ENCODE measurements at regions of chr18 and their contacts with region 1.

Region 1: DNA sequence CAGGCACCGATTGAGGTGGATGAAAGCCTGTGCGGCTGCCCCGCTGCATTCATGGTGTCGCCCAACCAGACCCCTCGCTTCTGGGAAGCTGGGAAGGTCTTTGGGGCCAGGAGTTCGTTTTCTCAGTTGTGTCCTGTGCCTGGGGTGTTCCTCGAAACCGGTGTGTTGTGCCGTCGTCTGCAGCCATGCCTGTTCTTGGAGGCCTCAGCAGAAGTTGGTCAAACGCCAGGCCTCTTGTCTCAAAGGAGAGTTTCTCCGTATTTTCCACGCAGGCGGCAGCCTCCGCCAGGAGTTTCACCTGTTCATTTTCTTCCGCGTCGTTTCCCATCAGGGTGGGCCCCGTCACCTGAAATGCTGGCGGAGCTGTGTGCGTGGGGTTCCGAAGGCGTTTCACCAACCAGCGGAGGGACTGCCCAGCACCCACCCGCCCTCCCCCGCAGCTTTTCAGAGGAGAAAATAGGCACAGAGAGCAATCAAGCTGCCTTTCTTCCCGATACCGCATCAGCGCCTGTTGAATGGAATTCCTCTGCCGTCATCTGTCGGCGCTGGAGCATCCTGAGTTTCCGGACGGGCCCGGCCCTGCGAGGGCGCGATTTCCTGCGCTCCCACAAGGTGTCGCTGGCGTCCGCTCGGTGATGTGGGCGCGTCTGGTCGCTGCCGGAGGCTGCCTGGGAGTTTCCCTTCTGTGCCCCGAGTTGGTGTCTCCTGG is 17.0 kb upstream of the NFATC1 start:
- H3K4me3 ChIP-seq: no peak overlapping the region
- H3K27ac ChIP-seq: no peak overlapping the region
- H3K4me1 ChIP-seq: no peaks in the 10 kb centered on the region
- CTCF ChIP-seq: peak; percentile 91

Region 2: DNA sequence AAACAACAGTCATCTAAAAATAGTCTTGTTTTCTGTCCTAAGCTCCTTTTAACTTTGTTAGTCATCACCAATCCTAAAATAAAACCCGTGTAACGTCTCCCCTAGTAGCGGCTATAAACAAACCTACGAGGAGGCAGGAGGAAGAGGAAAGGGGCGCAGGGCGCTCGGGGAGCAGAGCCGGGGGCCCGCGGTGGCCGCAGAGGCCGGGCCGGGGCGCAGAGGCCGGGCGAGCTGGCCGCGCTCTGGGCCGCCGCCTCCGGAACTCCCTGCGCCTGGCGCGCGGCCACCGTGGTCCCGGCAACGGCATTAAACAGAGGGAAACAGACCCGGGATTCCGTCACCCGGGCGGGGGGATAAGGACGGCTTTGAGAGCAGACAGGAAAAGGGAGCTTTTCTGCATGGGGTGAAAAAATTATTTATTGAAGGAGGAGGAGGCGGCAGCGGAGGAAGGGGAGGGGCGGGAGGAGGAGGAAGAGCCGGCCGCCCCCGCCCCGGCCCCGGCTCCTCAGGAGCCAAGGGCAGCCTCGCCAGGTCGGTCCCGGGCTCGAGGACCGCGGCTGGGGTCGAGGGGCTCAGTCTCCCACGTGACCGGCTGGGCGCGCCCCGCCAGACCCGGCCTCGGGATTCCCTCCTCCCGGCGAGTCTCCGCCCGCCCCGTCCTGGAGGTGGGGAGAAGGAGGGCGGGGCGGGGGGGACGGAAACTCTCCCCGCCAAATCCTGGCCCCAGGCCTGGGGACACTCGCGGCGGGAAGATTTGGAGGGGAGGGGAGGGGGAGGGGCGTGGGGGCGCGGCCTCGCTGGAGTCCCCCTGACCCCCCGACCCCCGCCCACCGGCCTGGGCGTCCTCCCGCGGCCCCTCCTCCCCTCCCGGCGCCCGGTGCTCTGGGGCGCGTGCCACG is 15.2 kb after region 1 on chr18:
- CTCF ChIA-PET with region 1: interaction called, 26 read pairs
- POLR2A ChIA-PET with region 1: no interaction called
- H3K4me3 ChIP-seq: peak overlapping the region; percentile 33
- H3K27ac ChIP-seq: peak overlapping the region; percentile 81; the same call in 1 of the 2 replicates
- H3K4me1 ChIP-seq: peaks cover 6% of the 10 kb centered on the region; the same call in 1 of the 2 replicates
- CTCF ChIP-seq: no peak

Region 3: DNA sequence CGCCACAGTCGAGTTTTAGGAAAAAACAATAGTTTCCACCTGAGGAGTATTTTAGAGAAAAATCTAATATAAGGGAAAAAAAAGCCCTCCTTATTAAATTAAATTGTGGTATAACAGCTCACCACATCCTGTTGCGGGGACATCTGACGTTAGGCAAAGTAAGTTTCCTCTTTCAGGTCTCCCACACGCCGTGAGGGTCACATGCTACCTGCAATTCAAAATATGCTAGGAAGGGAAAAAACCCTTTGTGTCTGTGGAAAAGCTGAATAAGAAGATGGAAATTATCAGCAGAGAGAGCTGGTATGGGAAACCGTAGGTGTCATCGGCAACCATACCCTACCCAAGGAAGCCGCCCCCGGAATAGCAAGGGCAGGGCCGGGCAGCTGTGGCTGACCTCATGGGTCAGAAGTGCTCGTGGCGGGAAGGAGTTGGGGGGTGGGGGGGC is 145.1 kb after region 1 on chr18:
- CTCF ChIA-PET with region 1: interaction called, 139 read pairs
- POLR2A ChIA-PET with region 1: no interaction called
- H3K4me3 ChIP-seq: no peak overlapping the region
- H3K27ac ChIP-seq: no peak overlapping the region
- H3K4me1 ChIP-seq: no peaks in the 10 kb centered on the region
- CTCF ChIP-seq: no peak

Region 4: GRCh38 chr18:79528846-79529245 is 150.2 kb after region 1 on chr18:
- CTCF ChIA-PET with region 1: interaction called, 139 read pairs
- POLR2A ChIA-PET with region 1: no interaction called
- H3K4me3 ChIP-seq: no peak overlapping the region
- H3K27ac ChIP-seq: no peak overlapping the region
- H3K4me1 ChIP-seq: no peaks in the 10 kb centered on the region
- CTCF ChIP-seq: peak; percentile 59; the same call in 1 of the 2 replicates

Region 5: DNA sequence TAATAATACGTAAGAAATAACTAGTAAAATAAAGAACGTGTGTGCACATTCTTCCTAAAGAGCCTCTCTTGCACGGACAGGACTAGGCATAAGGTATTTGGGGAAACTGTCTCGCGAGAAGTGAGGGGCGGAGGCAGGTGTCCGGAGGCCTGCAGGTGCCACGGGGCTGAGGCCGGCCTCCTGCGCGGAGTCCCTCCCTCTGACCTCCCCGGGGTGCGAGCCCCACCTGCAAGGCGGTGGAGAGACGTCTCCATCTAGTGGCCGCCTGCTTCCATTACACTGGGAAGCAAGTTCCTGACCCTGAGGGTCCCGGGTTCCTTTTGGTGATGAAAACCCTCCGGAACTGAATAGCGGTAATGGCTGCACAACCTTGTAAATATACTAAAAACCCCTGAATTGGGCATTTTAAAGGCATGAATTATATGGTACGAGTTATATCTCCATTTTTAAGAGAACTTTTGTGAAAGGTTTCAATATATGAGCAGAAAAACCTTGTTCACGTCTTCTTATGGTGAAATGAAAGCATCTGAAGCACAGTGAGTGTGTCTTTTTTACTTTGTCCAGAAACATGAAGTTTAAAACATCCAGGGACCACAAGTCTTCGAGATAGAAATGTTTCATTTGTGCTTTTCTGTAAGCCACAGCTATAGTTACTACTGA is 265.4 kb after region 1 on chr18:
- CTCF ChIA-PET with region 1: interaction called, 92 read pairs
- POLR2A ChIA-PET with region 1: no interaction called
- H3K4me3 ChIP-seq: no peak overlapping the region
- H3K27ac ChIP-seq: no peak overlapping the region
- H3K4me1 ChIP-seq: no peaks in the 10 kb centered on the region; the same call in 1 of the 2 replicates
- CTCF ChIP-seq: peak; percentile 87

Region 6: DNA sequence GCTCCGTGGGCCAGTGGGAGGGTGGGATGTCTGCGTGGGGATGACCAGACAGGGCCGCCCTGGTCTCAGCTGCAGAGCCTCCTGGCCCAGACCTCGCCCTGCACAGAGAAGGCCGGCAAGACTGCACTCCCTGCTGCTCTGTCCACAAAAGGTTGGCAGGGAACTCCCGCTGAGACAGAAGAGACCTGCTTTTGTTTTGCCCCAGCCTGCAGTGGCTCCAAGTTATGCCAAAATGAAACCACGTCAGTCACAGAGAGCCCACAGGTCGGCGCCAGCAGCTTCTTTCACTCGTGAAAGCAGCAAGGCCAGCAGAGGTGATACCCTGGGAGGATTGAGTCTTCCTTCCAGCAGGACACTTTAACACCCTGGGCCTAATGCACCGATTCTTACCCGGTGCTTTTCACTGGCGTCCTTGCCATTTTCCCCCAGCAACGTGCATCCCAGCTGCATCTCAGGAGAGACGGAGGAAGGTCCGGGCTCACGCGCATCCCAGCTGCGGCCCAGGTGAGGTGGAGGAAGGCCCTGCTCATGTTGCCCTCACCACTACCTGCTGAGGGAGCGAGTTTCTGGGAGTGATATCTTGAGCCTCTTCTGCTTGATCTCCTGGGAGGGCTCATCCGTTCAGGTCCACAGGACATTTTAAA is 278.8 kb after region 1 on chr18:
- CTCF ChIA-PET with region 1: interaction called, 16 read pairs
- POLR2A ChIA-PET with region 1: no interaction called
- H3K4me3 ChIP-seq: no peak overlapping the region
- H3K27ac ChIP-seq: no peak overlapping the region
- H3K4me1 ChIP-seq: no peaks in the 10 kb centered on the region
- CTCF ChIP-seq: no peak

Measured in HEK293 (cell line).